Mammary epithelial cell (primary cell): ENCODE measurements at regions of chr6 and their contacts with region 1.

Region 1: DNA sequence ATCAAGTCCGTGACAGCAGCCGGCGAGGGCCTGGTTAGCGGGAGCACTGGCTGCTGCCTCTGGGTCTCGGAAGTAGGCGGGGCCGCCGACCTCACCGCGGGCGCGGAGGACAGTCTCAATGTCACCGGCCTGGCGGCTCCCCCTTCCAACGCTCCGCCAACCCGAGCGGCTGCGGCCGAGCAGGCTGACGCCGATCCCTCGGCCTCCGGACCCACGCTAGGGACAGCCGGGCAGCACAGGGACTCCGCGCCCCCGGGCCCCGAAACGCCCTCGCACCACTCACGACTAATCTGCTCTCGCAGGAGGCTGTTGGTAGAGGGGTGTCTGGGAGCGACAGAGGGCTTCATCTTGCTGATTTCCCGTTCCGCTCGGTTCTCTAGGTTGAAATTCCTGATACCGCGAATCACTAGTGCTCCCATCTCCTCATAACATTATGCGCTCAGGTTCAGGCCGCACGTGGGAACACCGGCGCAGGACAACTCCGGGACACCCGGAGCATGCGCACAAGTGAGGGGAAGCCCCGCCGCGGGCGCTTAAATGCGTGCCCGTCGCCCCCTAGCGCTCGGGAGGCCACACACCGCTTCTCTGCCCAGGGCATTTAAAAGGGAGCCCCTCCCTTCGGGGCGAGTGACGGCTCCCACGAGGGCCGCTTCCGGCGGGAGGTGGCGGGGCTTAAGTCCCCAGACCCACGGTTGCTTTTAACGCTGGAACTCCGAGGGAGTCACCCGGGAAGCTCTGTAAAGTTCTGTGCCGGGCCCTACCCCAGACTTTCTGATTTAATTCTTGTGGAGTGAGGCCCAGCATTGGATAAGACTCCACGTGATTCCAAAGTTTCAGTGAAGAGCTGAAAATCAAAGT is at the start of gene NDUFAF4:
- DNase-seq: peak; percentile 90
- H3K4me3 ChIP-seq: peak within 1 kb of the TSS; percentile 60 to 80 (median 74)
- H3K27ac ChIP-seq: peak within 1 kb of the TSS; percentile 48
- H3K4me1 ChIP-seq: peaks cover 18% of the 10 kb centered on the region
- H3K27me3 ChIP-seq: no peaks in the 10 kb centered on the region
- CTCF ChIP-seq: peak; percentile 62 to 92
- total RNA-seq, gene NDUFAF4: 8.5 to 48.8 TPM

Region 2: GRCh38 chr6:96521644-96522464 is 375.8 kb before region 1 on chr6 and contains the start of gene UFL1:
- CTCF ChIA-PET with region 1: no interaction called
- dilution Hi-C with region 1: no loop called
- in situ Hi-C with region 1: no loop called
- intact Hi-C with region 1: loop called (anchors 5 kb)
- DNase-seq: peak; percentile 87
- H3K4me3 ChIP-seq: peak within 1 kb of the TSS; percentile 95 to 100 (median 99)
- H3K27ac ChIP-seq: peak within 1 kb of the TSS; percentile 91
- H3K4me1 ChIP-seq: peaks cover 19% of the 10 kb centered on the region
- H3K27me3 ChIP-seq: no peaks in the 10 kb centered on the region
- CTCF ChIP-seq: peak in 1 of 2 donors; percentile 30
- total RNA-seq, gene UFL1: 25.8 to 26.5 TPM

Region 3: GRCh38 chr6:96626759-96627364 is 270.8 kb before region 1 on chr6:
- CTCF ChIA-PET with region 1: no interaction called
- dilution Hi-C with region 1: no loop called
- in situ Hi-C with region 1: loop called in 1 of 2 experiments (anchors 25 kb)
- intact Hi-C with region 1: loop called (anchors 1 kb)
- DNase-seq: peak; percentile 1
- H3K4me3 ChIP-seq: no peak overlapping the region
- H3K27ac ChIP-seq: no peak overlapping the region
- H3K4me1 ChIP-seq: no peaks in the 10 kb centered on the region
- H3K27me3 ChIP-seq: peaks cover 4% of the 10 kb centered on the region
- CTCF ChIP-seq: peak; percentile 7 to 40

Region 4: DNA sequence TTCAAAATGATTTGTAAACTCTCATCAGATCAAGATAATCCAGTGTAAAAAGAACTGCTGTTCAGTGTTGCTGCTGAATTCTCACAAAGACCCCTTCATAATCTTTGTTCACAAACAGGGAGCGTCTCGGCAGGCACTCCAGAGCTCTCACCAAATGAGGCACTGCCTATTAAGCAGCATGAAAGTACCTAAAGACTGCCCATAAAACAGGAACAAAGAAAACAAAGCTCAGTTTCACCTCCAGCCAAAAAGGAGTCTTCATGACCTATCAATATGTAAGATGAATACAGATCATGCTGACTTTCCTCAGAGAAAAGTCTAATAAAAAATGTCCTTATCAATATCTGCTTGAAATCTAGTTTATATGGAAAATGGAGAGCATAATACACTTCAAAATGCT is 102.1 kb before region 1 on chr6:
- CTCF ChIA-PET with region 1: no interaction called
- dilution Hi-C with region 1: no loop called
- in situ Hi-C with region 1: no loop called
- intact Hi-C with region 1: no loop called
- DNase-seq: no peak
- H3K4me3 ChIP-seq: no peak overlapping the region
- H3K27ac ChIP-seq: no peak overlapping the region
- H3K4me1 ChIP-seq: no peaks in the 10 kb centered on the region
- H3K27me3 ChIP-seq: no peaks in the 10 kb centered on the region
- CTCF ChIP-seq: no peak

Region 5: GRCh38 chr6:96823743-96824142 is 73.9 kb before region 1 on chr6:
- CTCF ChIA-PET with region 1: no interaction called
- dilution Hi-C with region 1: no loop called
- in situ Hi-C with region 1: no loop called
- intact Hi-C with region 1: no loop called
- DNase-seq: no peak
- H3K4me3 ChIP-seq: no peak overlapping the region
- H3K27ac ChIP-seq: no peak overlapping the region
- H3K4me1 ChIP-seq: no peaks in the 10 kb centered on the region
- H3K27me3 ChIP-seq: no peaks in the 10 kb centered on the region
- CTCF ChIP-seq: no peak

Region 6: GRCh38 chr6:96837081-96837971 is 60.3 kb before region 1 on chr6 and contains the start of gene GPR63:
- CTCF ChIA-PET with region 1: no interaction called
- dilution Hi-C with region 1: no loop called
- in situ Hi-C with region 1: no loop called
- intact Hi-C with region 1: loop called (anchors 1 kb)
- DNase-seq: peak; percentile 90
- H3K4me3 ChIP-seq: peak within 1 kb of the TSS; percentile 62 to 89 (median 78)
- H3K27ac ChIP-seq: peak within 1 kb of the TSS; percentile 37
- H3K4me1 ChIP-seq: no peaks in the 10 kb centered on the region
- H3K27me3 ChIP-seq: no peaks in the 10 kb centered on the region
- CTCF ChIP-seq: no peak
- total RNA-seq, gene GPR63: 1.2 to 2.7 TPM

Region 7: GRCh38 chr6:97053643-97054411 is 156.2 kb after region 1 on chr6:
- CTCF ChIA-PET with region 1: no interaction called
- dilution Hi-C with region 1: no loop called
- in situ Hi-C with region 1: loop called (anchors 5 kb)
- intact Hi-C with region 1: loop called (anchors 1 kb)
- DNase-seq: no peak
- H3K4me3 ChIP-seq: no peak overlapping the region
- H3K27ac ChIP-seq: no peak overlapping the region
- H3K4me1 ChIP-seq: peaks cover 7% of the 10 kb centered on the region
- H3K27me3 ChIP-seq: peaks cover 4% of the 10 kb centered on the region
- CTCF ChIP-seq: peak; percentile 38 to 50

Region 8: GRCh38 chr6:97059473-97059872 is 161.9 kb after region 1 on chr6:
- CTCF ChIA-PET with region 1: no interaction called
- dilution Hi-C with region 1: no loop called
- in situ Hi-C with region 1: loop called (anchors 5 kb)
- intact Hi-C with region 1: loop called (anchors 1 kb)
- DNase-seq: peak; percentile 17
- H3K4me3 ChIP-seq: no peak overlapping the region
- H3K27ac ChIP-seq: no peak overlapping the region
- H3K4me1 ChIP-seq: no peaks in the 10 kb centered on the region
- H3K27me3 ChIP-seq: no peaks in the 10 kb centered on the region
- CTCF ChIP-seq: peak; percentile 38 to 54

Region 9: DNA sequence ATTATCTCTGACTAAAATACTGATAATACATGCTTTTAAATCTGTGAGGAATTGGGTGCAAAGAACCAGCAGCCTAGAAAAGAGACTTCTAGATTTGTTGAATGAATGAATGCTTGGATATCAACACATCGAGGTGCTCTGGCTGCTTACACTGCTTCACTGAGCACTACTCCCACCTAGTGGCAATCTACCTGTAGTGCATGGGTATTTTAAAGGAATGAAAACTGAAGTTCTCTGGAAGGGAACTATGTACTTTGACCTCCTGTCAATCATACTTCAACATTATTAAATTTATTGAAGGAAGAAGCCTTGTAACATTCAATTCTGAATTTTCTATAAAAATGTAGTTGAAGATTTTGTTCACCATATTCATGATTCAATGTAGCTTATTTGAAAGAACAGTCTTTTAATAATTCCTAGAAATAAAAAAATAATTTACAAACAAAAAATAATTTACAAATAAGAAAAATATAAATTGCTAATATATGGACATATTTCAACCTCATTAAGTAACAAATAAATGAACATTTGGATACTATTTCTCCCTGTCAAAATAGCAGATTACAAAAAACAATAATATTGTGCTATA is 496.6 kb after region 1 on chr6:
- CTCF ChIA-PET with region 1: no interaction called
- dilution Hi-C with region 1: no loop called
- in situ Hi-C with region 1: no loop called
- intact Hi-C with region 1: loop called (anchors 10 kb)
- DNase-seq: peak; percentile 29
- H3K4me3 ChIP-seq: no peak overlapping the region
- H3K27ac ChIP-seq: no peak overlapping the region
- H3K4me1 ChIP-seq: no peaks in the 10 kb centered on the region
- H3K27me3 ChIP-seq: no peaks in the 10 kb centered on the region
- CTCF ChIP-seq: peak; percentile 88 to 93